WTC11 (cell line): ENCODE measurements at regions of chr11 and their contacts with region 1.

Region 1: DNA sequence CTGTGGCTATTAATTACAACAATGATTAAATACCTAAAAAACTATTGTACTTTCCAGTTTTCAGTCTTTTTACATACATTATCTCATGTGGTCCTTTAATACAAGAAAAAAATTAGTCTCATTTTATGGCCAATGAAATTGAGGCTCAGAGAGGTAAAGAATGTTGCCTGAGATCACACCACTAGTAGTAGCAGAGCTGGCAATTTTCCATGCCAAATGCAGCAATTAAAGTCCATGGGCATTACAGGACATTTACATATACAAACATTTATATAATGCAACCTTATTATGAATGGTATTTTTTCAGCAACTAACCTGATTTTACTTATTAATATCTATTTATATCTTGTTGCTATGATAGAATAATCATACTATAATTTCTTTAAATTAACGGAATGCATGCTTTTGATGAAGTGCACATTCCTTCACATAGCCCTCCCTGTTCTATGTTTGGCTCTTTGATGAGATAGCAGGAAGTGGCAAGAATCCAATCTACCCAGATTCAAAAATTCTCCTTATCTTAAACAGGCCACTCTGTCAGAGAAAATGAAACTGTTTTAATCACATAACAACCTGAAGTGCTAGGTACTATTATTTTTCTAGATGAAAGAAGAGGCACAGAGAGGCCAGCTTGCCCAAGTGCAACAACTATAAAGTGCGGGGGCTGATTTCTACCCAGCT is 120.9 kb upstream of the LDLRAD3 start:
- DNase-seq: no peak
- ATAC-seq: no peak
- H3K4me3 Mint-ChIP-seq: no peak overlapping the region
- H3K27ac Mint-ChIP-seq: no peak overlapping the region
- H3K4me1 Mint-ChIP-seq: peaks cover 15% of the 10 kb centered on the region
- H3K27me3 Mint-ChIP-seq: peaks cover 8% of the 10 kb centered on the region; the same call in 1 of the 2 replicates
- CTCF ChIP-seq: no peak

Region 2: DNA sequence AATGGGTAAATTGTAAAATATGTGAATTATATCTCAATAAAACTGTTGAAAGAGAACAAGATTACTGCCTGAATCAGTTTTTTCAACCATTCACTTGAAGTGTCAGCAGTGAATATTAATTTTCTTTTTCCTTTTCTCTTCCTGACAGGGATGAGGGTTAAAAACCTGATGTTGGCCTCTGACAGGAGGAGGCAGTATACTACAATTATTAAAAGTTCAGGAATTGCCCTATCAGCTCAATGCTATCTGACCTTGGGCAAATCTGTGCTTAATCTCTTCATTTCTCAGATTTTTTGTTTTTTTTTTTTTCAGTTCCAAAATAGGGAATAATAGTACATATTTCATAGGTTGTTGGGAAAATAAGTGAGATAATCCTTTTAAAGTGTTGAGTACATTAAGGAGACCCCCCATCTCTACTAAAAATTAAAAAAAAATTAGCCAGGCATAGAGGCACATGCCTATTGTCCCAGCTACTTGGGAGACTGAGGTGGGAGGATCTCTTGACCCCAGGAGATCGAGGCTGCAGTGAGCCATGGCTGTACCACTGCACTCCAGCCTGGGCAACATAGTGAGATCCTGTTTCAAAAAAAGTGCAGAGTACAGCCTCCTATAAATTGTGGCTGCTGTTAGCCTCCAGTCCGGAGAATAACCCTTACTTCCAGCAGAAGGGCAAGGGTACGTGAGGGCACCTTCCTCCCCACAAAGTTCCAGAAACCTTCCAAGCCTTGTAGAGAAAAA is 111.6 kb before region 1 on chr11:
- CTCF ChIA-PET with region 1: interaction called, 14 read pairs
- POLR2A ChIA-PET with region 1: no interaction called
- DNase-seq: no peak
- ATAC-seq: no peak
- H3K4me3 Mint-ChIP-seq: no peak overlapping the region
- H3K27ac Mint-ChIP-seq: no peak overlapping the region
- H3K4me1 Mint-ChIP-seq: peaks cover 3% of the 10 kb centered on the region; the same call in 1 of the 2 replicates
- H3K27me3 Mint-ChIP-seq: no peaks in the 10 kb centered on the region
- CTCF ChIP-seq: no peak

Region 3: DNA sequence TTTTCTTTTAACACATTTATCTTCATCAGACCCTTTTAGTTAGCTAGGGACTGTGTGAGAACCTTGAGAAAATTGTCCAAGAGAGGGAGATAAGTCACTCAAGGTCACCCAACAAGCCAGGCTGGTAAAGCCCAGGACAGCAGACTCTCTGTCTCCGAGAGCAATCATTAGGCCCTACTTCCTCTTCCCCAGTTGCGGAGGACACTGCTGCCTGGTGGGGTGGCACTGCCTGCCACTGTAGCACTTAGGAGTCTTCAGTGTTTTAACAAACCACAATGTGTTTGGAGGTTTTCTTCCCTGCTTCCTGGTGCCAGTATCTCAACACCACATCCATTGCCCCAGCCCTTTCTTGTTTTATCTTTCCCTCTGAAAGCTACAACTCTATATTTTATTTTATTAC is 11.2 kb before region 1 on chr11:
- CTCF ChIA-PET with region 1: interaction called, 56 read pairs
- POLR2A ChIA-PET with region 1: no interaction called
- DNase-seq: no peak
- ATAC-seq: no peak
- H3K4me3 Mint-ChIP-seq: no peak overlapping the region
- H3K27ac Mint-ChIP-seq: no peak overlapping the region
- H3K4me1 Mint-ChIP-seq: peaks cover 7% of the 10 kb centered on the region; the same call in 1 of the 2 replicates
- H3K27me3 Mint-ChIP-seq: no peaks in the 10 kb centered on the region
- CTCF ChIP-seq: no peak

Region 4: GRCh38 chr11:35943713-35944655 is 121.0 kb after region 1 on chr11 and contains the start of gene LDLRAD3:
- CTCF ChIA-PET with region 1: interaction called, 21 read pairs
- POLR2A ChIA-PET with region 1: no interaction called
- DNase-seq: peak; percentile 81
- ATAC-seq: peak; percentile 86
- H3K4me3 Mint-ChIP-seq: peak within 1 kb of the TSS; percentile 88
- H3K27ac Mint-ChIP-seq: peak within 1 kb of the TSS; percentile 92
- H3K4me1 Mint-ChIP-seq: peaks cover 50% of the 10 kb centered on the region
- H3K27me3 Mint-ChIP-seq: peaks cover 23% of the 10 kb centered on the region
- CTCF ChIP-seq: no peak
- total RNA-seq, gene LDLRAD3: 12.6 to 14.5 TPM (median 14.5 TPM) in 3 replicates

Region 5: GRCh38 chr11:36048496-36049247 is 225.7 kb after region 1 on chr11:
- CTCF ChIA-PET with region 1: interaction called, 28 read pairs
- POLR2A ChIA-PET with region 1: no interaction called
- DNase-seq: no peak
- ATAC-seq: no peak
- H3K4me3 Mint-ChIP-seq: no peak overlapping the region
- H3K27ac Mint-ChIP-seq: no peak overlapping the region
- H3K4me1 Mint-ChIP-seq: peaks cover 37% of the 10 kb centered on the region
- H3K27me3 Mint-ChIP-seq: no peaks in the 10 kb centered on the region
- CTCF ChIP-seq: no peak

Region 6: GRCh38 chr11:36149538-36150242 is 326.7 kb after region 1 on chr11:
- CTCF ChIA-PET with region 1: interaction called, 47 read pairs
- POLR2A ChIA-PET with region 1: no interaction called
- DNase-seq: peak; percentile 34
- ATAC-seq: peak; percentile 83
- H3K4me3 Mint-ChIP-seq: no peak overlapping the region
- H3K27ac Mint-ChIP-seq: peak overlapping the region; percentile 50
- H3K4me1 Mint-ChIP-seq: peaks cover 40% of the 10 kb centered on the region
- H3K27me3 Mint-ChIP-seq: no peaks in the 10 kb centered on the region
- CTCF ChIP-seq: peak; percentile 30; the same call in 1 of the 2 replicates

Region 7: GRCh38 chr11:36278531-36279282 is 455.8 kb after region 1 on chr11:
- CTCF ChIA-PET with region 1: interaction called, 26 read pairs
- POLR2A ChIA-PET with region 1: no interaction called
- DNase-seq: no peak
- ATAC-seq: peak; percentile 91
- H3K4me3 Mint-ChIP-seq: no peak overlapping the region
- H3K27ac Mint-ChIP-seq: no peak overlapping the region
- H3K4me1 Mint-ChIP-seq: no peaks in the 10 kb centered on the region
- H3K27me3 Mint-ChIP-seq: no peaks in the 10 kb centered on the region; the same call in 1 of the 2 replicates
- CTCF ChIP-seq: no peak